ENCODE measurements at regions of chr7 and their contacts with region 1.

Region 1: GRCh38 chr7:25675789-25676474 is 447.6 kb upstream of the NPVF start:
- DNase-seq: peak; percentile 57
- ATAC-seq: peak; percentile 73 to 86

Region 2: GRCh38 chr7:25469669-25470068 is 206.3 kb before region 1 on chr7:
- intact Hi-C with region 1: no loop called
- DNase-seq: no peak
- ATAC-seq: no peak

Region 3: GRCh38 chr7:25481891-25482290 is 194.0 kb before region 1 on chr7:
- intact Hi-C with region 1: no loop called
- DNase-seq: no peak
- ATAC-seq: no peak

Region 4: GRCh38 chr7:25832456-25832855 is 156.5 kb after region 1 on chr7:
- intact Hi-C with region 1: no loop called
- DNase-seq: no peak
- ATAC-seq: peak; percentile 55 to 71

Region 5: GRCh38 chr7:25844102-25844870 is 168.4 kb after region 1 on chr7:
- intact Hi-C with region 1: loop called in 1 of 2 experiments (anchors 5 kb)
- DNase-seq: no peak
- ATAC-seq: no peak